ENCODE measurements at regions of chr6 and their contacts with region 1.

Region 1: DNA sequence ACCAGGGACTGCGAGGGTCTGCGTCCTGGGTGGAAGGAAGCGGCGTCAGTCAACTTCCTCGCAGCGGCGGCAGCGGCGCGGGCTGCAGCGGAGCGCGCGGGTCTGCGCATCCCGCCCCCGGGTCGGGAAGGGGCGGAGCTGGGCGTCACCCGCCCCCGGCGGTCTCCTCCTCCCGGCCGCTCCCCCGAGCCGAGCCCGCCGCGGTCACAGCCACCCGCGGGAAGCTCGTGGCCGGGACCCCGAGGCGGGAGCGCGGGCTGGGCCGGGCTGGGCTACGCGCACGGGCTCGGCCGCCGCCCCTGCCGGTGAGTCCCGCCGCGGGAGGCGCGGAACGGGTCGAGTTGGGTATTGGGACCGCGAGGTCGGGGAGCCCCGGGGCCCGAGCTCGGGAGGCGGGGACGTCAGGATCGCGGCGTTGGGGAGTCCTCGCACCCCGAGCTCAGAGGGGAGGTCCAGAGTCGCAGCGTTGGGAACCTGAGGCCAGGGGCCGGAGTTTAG is at the start of gene PAQR8:
- DNase-seq: peak; percentile 78
- ATAC-seq: peak; percentile 89
- H3K4me3 Mint-ChIP-seq: peak within 1 kb of the TSS; percentile 100
- H3K27ac Mint-ChIP-seq: peak within 1 kb of the TSS; percentile 98
- H3K4me1 Mint-ChIP-seq: peaks cover 39% of the 10 kb centered on the region
- H3K27me3 Mint-ChIP-seq: no peaks in the 10 kb centered on the region
- CTCF ChIP-seq: no peak
- total RNA-seq, gene PAQR8: 12.9 to 13.7 TPM

Region 2: GRCh38 chr6:52077180-52077884 is 284.7 kb before region 1 on chr6:
- CTCF ChIA-PET with region 1: no interaction called
- POLR2A ChIA-PET with region 1: no interaction called
- intact Hi-C with region 1: no loop called
- DNase-seq: no peak
- ATAC-seq: no peak
- H3K4me3 Mint-ChIP-seq: no peak overlapping the region
- H3K27ac Mint-ChIP-seq: no peak overlapping the region
- H3K4me1 Mint-ChIP-seq: no peaks in the 10 kb centered on the region
- H3K27me3 Mint-ChIP-seq: peaks cover 21% of the 10 kb centered on the region
- CTCF ChIP-seq: no peak

Region 3: DNA sequence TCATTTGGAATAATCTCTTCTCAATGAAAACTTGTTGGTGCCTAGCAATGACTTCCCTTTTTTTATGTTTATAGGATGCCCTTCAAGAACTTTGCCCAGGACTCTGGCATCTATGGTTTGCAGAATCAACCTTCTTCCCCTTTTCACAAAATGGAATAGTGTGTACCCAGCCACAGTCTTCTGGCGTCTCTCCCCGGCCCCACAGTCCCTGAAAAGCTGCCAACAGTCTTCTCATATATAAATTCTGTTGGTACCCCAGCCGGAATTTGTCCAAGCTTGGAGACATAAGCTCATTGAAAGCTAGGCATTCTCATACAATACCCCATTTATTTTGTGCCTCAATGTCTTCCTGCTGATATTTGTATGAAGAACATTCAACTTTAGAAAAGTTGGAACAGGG is 51.1 kb before region 1 on chr6:
- CTCF ChIA-PET with region 1: interaction called, 13 read pairs
- POLR2A ChIA-PET with region 1: interaction called, 5 read pairs
- intact Hi-C with region 1: no loop called
- DNase-seq: no peak
- ATAC-seq: no peak
- H3K4me3 Mint-ChIP-seq: no peak overlapping the region
- H3K27ac Mint-ChIP-seq: no peak overlapping the region
- H3K4me1 Mint-ChIP-seq: peaks cover 34% of the 10 kb centered on the region
- H3K27me3 Mint-ChIP-seq: no peaks in the 10 kb centered on the region
- CTCF ChIP-seq: no peak

Region 4: DNA sequence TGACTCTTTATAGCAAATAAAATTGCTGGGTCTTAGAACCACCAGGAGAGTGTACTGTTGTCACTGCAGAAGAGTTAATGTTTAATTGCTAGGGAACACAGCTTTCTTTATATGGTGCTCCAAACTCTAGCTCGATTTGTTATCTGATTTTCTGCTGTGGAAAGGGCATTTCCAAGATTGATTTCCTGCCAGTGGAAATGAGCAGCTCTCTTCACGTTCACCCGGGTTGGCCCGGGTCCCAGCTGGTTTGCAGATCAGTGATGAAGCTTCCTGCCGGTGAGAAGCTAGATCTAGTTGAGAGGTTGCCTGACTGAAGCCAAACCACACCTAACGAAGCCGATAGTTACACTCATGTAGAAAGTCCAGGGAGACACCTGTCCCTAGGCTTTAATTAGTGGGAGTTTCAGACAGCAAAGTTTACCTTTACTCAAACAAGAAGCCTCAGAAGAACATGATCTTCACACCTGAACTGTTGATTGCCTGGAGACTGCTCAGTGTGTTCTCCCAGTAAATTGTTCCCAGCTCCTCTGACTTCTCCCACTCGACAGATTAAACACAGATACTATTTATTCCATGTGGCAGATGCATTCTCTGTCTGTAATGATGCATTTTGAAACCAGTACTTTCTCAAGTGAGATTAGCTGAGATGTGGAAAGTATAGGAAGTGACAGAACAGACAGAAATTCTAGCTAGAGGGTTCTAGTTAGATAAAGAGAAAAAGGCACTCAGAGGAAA is 27.8 kb after region 1 on chr6:
- CTCF ChIA-PET with region 1: interaction called, 34 read pairs
- POLR2A ChIA-PET with region 1: interaction called, 28 read pairs
- intact Hi-C with region 1: no loop called
- DNase-seq: peak; percentile 77
- ATAC-seq: peak; percentile 64
- H3K4me3 Mint-ChIP-seq: peak overlapping the region; percentile 54
- H3K27ac Mint-ChIP-seq: peak overlapping the region; percentile 93
- H3K4me1 Mint-ChIP-seq: peaks cover 86% of the 10 kb centered on the region
- H3K27me3 Mint-ChIP-seq: no peaks in the 10 kb centered on the region
- CTCF ChIP-seq: no peak

Region 5: DNA sequence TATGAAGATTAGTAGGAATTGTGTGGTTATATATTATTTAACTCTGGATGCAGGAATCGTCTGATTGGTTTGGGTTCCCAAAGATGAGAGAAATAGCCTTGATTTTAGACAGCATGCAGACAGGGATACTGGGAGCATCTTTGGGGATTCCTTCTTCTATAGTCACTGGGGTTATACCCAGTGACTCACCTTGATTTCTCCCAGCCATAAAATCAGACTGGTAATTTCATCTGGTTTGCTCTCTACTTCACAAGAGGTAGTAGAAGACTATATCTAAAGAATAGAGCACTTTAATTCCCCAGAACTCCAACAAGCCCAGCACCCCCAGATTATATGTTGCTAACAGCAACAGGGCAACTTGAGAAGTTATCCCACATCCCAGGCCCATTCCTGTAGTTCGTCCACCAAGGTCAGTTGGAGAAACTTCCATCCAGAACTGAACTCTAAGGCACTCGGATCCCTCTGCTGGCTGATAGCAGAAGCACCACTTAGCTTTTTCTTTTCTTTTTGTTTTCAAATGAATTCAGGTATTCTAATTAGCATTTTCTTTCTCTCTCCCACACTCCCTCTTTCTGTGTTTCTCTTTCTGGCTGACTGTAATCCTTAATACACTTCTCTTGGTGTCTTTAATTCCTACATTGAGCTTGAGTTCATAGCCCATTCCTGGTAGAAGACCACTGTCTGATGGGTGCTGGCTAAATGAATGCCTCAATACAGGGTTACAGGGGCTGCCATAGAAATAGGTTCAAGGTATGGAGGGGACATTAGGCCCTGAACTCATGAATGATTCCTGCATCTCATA is 37.7 kb after region 1 on chr6:
- CTCF ChIA-PET with region 1: interaction called, 89 read pairs
- POLR2A ChIA-PET with region 1: interaction called, 5 read pairs
- intact Hi-C with region 1: loop called (anchors 5 kb)
- DNase-seq: peak; percentile 57
- ATAC-seq: peak; percentile 51
- H3K4me3 Mint-ChIP-seq: no peak overlapping the region
- H3K27ac Mint-ChIP-seq: peak overlapping the region; percentile 78
- H3K4me1 Mint-ChIP-seq: peaks cover 65% of the 10 kb centered on the region
- H3K27me3 Mint-ChIP-seq: no peaks in the 10 kb centered on the region
- CTCF ChIP-seq: peak; percentile 91

Region 6: DNA sequence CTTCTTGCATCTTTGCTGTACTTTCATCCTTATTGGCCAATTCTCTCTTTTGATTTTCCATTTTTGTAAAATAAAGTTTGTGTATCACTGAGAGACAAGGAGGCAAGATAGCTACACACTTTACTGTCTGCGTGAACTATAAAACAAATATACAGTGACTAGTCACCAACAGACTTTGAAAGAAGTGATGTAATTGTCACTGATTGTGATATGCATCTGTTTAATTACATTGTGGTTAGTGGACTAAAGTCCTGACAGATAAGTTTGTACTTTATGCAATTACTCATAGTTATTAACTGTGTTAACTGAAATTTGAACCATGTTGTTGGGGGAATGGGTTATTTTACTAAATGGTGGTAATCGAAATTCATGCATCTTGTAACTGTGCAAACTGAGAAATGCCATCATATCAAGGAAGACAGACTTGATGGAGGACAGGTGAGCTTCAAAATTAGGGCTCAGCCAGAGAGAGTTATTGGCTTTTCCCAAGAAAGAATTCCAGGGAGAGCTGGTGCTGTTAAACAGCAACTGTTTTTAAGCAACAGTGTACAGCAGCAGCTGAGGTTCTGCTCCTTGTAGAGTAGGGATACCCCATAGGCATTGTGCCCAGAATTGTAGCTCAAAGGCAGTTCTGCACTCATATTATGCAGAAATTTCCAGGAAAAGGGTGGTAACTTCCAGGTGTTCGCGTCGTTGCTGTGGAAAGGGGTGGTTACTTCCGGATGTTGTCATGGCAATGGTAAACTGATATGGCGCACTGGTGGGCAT is 121.1 kb after region 1 on chr6:
- CTCF ChIA-PET with region 1: no interaction called
- POLR2A ChIA-PET with region 1: no interaction called
- intact Hi-C with region 1: no loop called
- DNase-seq: no peak
- ATAC-seq: no peak
- H3K4me3 Mint-ChIP-seq: no peak overlapping the region
- H3K27ac Mint-ChIP-seq: no peak overlapping the region
- H3K4me1 Mint-ChIP-seq: no peaks in the 10 kb centered on the region
- H3K27me3 Mint-ChIP-seq: no peaks in the 10 kb centered on the region
- CTCF ChIP-seq: no peak

Measured in activated CD8-positive, alpha-beta T cell treated with anti-CD3 and anti-CD28 coated beads for 36 hours (primary cell).